ENCODE measurements at regions of chr11 and their contacts with region 1.

Region 1: GRCh38 chr11:48109046-48109666 is 107.5 kb upstream of the OR4B1 start:
- DNase-seq: peak in 1 of 2 experiments; percentile 13
- H3K4me3 ChIP-seq: no peak overlapping the region
- H3K27ac ChIP-seq: no peak overlapping the region
- H3K4me1 ChIP-seq: peaks cover 0 to 5% (median 4%) of the 10 kb centered on the region in 4 experiments; a peak in 3 of 7 replicates
- H3K27me3 ChIP-seq: no peaks in the 10 kb centered on the region
- CTCF ChIP-seq: peak in 1 of 3 experiments; percentile 24; a peak in 2 of 4 replicates
- EP300 ChIP-seq: no peak
- POLR2A ChIP-seq: no peak
- RAD21 ChIP-seq: peak; percentile 24 to 34

Region 2: GRCh38 chr11:47924184-47924691 is 184.9 kb before region 1 on chr11:
- CTCF ChIA-PET with region 1: interaction called, 172 read pairs
- POLR2A ChIA-PET with region 1: no interaction called
- DNase-seq: no peak
- H3K4me3 ChIP-seq: no peak overlapping the region
- H3K27ac ChIP-seq: no peak overlapping the region
- H3K4me1 ChIP-seq: peaks cover 0 to 3% (median 2%) of the 10 kb centered on the region in 4 experiments; a peak in 4 of 7 replicates
- H3K27me3 ChIP-seq: no peaks in the 10 kb centered on the region
- CTCF ChIP-seq: no peak
- EP300 ChIP-seq: no peak
- POLR2A ChIP-seq: no peak
- RAD21 ChIP-seq: no peak

Region 3: GRCh38 chr11:47967577-47968425 is 141.4 kb before region 1 on chr11:
- CTCF ChIA-PET with region 1: interaction called, 45 read pairs
- POLR2A ChIA-PET with region 1: no interaction called
- DNase-seq: no peak
- H3K4me3 ChIP-seq: no peak overlapping the region
- H3K27ac ChIP-seq: no peak overlapping the region
- H3K4me1 ChIP-seq: no peaks in the 10 kb centered on the region; a peak in 1 of 7 replicates
- H3K27me3 ChIP-seq: no peaks in the 10 kb centered on the region
- CTCF ChIP-seq: no peak
- EP300 ChIP-seq: no peak
- POLR2A ChIP-seq: no peak
- RAD21 ChIP-seq: no peak

Region 4: GRCh38 chr11:48055292-48056132 is 53.6 kb before region 1 on chr11:
- CTCF ChIA-PET with region 1: interaction called, 10 read pairs
- POLR2A ChIA-PET with region 1: no interaction called
- DNase-seq: no peak
- H3K4me3 ChIP-seq: no peak overlapping the region
- H3K27ac ChIP-seq: peak overlapping the region; percentile 28; the same call in 1 of the 2 replicates
- H3K4me1 ChIP-seq: peaks cover 4 to 26% (median 21%) of the 10 kb centered on the region in 4 experiments
- H3K27me3 ChIP-seq: no peaks in the 10 kb centered on the region
- CTCF ChIP-seq: no peak
- EP300 ChIP-seq: no peak
- POLR2A ChIP-seq: no peak
- RAD21 ChIP-seq: no peak

Region 5: GRCh38 chr11:48097041-48097476 is 12.1 kb before region 1 on chr11:
- CTCF ChIA-PET with region 1: interaction called, 34 read pairs
- POLR2A ChIA-PET with region 1: no interaction called
- DNase-seq: peak in 1 of 2 experiments; percentile 52
- H3K4me3 ChIP-seq: no peak overlapping the region
- H3K27ac ChIP-seq: peak overlapping the region; percentile 17; the same call in 1 of the 2 replicates
- H3K4me1 ChIP-seq: peaks cover 0 to 17% (median 14%) of the 10 kb centered on the region in 4 experiments; a peak in 6 of 7 replicates
- H3K27me3 ChIP-seq: no peaks in the 10 kb centered on the region
- CTCF ChIP-seq: peak in 2 of 3 experiments; percentile 43 to 44; a peak in 2 of 4 replicates
- EP300 ChIP-seq: no peak
- POLR2A ChIP-seq: no peak
- RAD21 ChIP-seq: peak in 1 of 2 experiments; percentile 43; a peak in 1 of 4 replicates

Region 6: DNA sequence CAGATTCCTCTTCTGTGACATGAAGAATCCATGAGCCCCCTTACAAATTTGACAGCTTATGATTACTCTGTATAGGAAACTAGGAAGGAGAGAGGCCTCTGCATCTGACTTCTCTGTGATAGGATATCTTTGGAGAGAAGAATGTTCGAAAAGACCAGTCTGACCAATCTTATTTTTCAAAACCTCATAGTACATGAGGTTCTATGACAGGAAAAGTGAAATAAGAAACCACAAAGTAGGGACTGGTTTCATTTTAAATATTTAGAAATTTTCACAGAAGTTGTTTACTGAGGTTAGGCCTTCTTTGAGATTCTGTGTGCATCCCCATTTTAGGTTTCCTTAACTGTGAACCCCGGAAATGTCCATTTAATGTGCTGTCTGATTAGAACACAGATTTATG is 152.4 kb after region 1 on chr11:
- CTCF ChIA-PET with region 1: no interaction called
- POLR2A ChIA-PET with region 1: no interaction called
- DNase-seq: no peak
- H3K4me3 ChIP-seq: no peak overlapping the region
- H3K27ac ChIP-seq: no peak overlapping the region
- H3K4me1 ChIP-seq: no peaks in the 10 kb centered on the region
- H3K27me3 ChIP-seq: no peaks in the 10 kb centered on the region
- CTCF ChIP-seq: no peak
- EP300 ChIP-seq: no peak
- POLR2A ChIP-seq: no peak
- RAD21 ChIP-seq: no peak

Measured in H1 (cell line).